Activated CD4-positive, alpha-beta memory T cell treated with anti-CD3 and anti-CD28 coated beads, Interleukin-2, amount 10 ng/mL, durations not matched to agents 7 days and 5 days (primary cell): ENCODE measurements at regions of chr15 and their contacts with region 1.

Region 1: GRCh38 chr15:101258238-101259144 is 6.6 kb upstream of the CHSY1 start:
- DNase-seq: peak; percentile 63
- H3K4me3 Mint-ChIP-seq: no peak overlapping the region
- H3K27ac Mint-ChIP-seq: no peak overlapping the region
- H3K4me1 Mint-ChIP-seq: peaks cover 29% of the 10 kb centered on the region
- H3K27me3 Mint-ChIP-seq: peaks cover 22% of the 10 kb centered on the region

Region 2: DNA sequence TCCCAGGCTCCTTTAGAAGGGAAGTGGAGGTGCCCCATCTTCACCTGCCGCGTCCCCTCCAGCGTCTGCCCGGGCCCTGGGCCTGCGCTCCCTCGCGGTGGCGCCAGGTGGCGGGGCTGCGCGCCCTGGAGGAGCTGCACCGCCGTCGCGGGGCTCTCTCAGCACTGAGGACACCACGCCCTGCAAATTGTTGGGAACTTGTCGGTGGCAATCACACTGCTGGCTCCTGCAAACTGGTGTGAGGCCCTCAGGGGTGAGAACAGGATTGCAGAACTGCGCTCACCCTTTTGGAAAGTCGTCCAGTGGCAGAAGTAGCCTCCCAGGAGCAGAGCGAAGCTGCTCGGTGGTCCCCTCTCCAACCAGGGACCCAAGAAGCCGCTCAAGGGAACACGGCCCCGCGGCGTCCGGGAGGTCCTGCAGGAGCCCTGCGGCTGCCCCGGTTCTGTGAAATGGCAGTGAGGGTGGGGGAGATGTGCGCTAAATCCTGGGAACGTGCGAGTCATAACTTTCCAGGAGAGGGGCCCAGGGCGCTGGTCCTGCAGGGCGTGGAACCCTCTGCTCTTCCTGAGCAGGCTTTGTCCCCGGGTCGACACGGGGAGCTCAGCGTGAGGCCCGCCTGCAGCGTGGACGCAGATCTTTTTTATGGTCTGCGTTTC is 340.3 kb before region 1 on chr15:
- CTCF ChIA-PET with region 1: interaction called, 10 read pairs
- POLR2A ChIA-PET with region 1: no interaction called
- DNase-seq: peak; percentile 75
- H3K4me3 Mint-ChIP-seq: peak overlapping the region; percentile 56
- H3K27ac Mint-ChIP-seq: no peak overlapping the region
- H3K4me1 Mint-ChIP-seq: peaks cover 27% of the 10 kb centered on the region
- H3K27me3 Mint-ChIP-seq: peaks cover 70% of the 10 kb centered on the region

Region 3: DNA sequence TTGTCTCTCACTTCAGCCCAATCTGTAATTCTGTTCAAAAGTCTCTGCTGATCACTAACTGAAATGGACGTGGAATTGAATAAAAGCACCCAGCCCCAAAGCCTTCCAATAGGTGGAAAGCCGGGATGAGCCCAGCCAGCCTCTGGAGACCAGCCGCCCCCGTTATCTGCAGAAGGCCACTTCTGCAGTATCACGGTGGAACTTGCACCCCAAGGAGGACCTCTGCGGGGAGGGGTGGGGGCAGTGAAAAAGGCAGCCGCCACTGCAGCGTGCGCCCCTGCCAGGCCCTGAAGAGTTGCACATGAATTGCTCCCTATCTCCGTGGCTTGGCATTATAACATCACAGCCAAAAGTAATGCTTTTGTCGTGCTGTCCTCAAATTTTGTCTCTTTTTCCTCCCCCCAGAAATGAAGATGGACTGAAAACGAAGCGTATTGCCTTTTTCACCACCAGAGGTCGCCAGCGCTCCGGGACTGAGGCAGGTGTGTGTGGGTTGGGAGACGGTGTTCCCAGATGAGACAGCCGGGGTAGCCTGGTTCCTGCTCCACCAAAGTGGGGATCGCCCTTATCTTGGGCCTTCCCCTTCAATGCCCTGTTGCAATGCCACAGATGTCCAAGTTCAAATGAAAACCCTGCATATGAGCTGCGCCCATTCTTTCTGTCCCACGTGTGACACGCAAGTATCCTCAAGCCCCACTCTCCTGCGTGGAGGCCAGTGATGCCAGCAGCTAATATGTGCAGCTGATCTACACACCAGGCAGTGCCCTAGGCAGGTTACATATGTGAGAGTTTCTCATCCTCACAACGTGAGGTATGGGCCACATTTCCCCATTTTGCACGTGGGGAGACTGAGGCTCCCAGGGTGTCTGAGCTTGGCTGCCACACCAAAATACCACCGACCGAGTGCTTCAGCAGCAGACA is 243.3 kb before region 1 on chr15:
- CTCF ChIA-PET with region 1: interaction called, 120 read pairs
- POLR2A ChIA-PET with region 1: interaction called, 5 read pairs
- DNase-seq: peak; percentile 74
- H3K4me3 Mint-ChIP-seq: no peak overlapping the region
- H3K27ac Mint-ChIP-seq: no peak overlapping the region
- H3K4me1 Mint-ChIP-seq: no peaks in the 10 kb centered on the region
- H3K27me3 Mint-ChIP-seq: peaks cover 6% of the 10 kb centered on the region

Region 4: GRCh38 chr15:101083336-101084070 is 175.0 kb before region 1 on chr15:
- CTCF ChIA-PET with region 1: interaction called, 81 read pairs
- POLR2A ChIA-PET with region 1: no interaction called
- DNase-seq: no peak
- H3K4me3 Mint-ChIP-seq: no peak overlapping the region
- H3K27ac Mint-ChIP-seq: no peak overlapping the region
- H3K4me1 Mint-ChIP-seq: no peaks in the 10 kb centered on the region
- H3K27me3 Mint-ChIP-seq: peaks cover 17% of the 10 kb centered on the region

Region 5: GRCh38 chr15:101242160-101242998 is 16.1 kb before region 1 on chr15:
- CTCF ChIA-PET with region 1: interaction called, 51 read pairs
- POLR2A ChIA-PET with region 1: interaction called, 12 read pairs
- DNase-seq: peak; percentile 80
- H3K4me3 Mint-ChIP-seq: peak overlapping the region; percentile 60
- H3K27ac Mint-ChIP-seq: peak overlapping the region; percentile 84
- H3K4me1 Mint-ChIP-seq: peaks cover 95% of the 10 kb centered on the region
- H3K27me3 Mint-ChIP-seq: no peaks in the 10 kb centered on the region